B cell (primary cell): ENCODE measurements at regions of chr20 and their contacts with region 1.

Region 1: DNA sequence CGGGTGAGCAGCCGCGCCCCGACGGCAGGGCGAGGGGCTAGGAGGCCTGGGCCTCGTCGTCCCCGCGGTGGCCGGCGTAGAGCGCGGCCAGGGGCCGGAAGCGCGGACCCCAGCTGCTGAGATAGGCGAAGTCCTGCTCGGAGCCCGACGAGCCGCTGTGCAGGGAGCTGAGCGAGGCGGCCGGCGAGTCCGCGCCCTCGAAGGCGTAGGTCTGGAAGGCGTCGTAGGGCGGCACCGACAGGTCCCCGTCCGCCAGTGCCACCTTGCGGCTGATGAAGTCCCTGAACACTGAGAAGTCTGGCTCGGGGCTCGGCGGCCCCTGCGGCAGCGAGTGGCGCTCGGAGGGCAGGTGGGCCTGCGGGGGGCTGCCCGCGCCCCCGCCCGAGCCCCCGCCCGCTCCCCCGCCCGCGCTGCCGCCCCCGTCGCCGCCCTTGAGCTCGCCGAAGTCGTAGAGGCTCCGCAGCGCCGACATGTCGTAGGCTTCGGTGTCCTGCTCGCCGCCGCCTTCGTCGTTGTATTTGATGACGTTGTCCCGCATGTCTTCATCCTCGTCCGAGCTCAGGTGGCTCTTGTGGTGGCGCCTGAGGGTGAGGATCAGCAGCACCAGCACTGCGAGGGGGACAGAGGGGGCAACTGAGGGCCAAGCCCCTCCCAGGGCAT is 56.5 kb downstream of the CD40 start:
- DNase-seq: peak; percentile 85
- ATAC-seq: peak; percentile 96
- H3K4me3 ChIP-seq: no peak overlapping the region
- H3K4me3 Mint-ChIP-seq: no peak overlapping the region
- H3K27ac ChIP-seq: no peak overlapping the region
- H3K27ac Mint-ChIP-seq: no peak overlapping the region
- H3K4me1 ChIP-seq: peaks cover 4 to 16% of the 10 kb centered on the region in 2 donors
- H3K4me1 Mint-ChIP-seq: no peaks in the 10 kb centered on the region
- H3K27me3 ChIP-seq: peaks cover 0 to 45% (median 32%) of the 10 kb centered on the region in 4 experiments
- H3K27me3 Mint-ChIP-seq: peaks cover 58% of the 10 kb centered on the region
- CTCF ChIP-seq: peak; percentile 70

Region 2: DNA sequence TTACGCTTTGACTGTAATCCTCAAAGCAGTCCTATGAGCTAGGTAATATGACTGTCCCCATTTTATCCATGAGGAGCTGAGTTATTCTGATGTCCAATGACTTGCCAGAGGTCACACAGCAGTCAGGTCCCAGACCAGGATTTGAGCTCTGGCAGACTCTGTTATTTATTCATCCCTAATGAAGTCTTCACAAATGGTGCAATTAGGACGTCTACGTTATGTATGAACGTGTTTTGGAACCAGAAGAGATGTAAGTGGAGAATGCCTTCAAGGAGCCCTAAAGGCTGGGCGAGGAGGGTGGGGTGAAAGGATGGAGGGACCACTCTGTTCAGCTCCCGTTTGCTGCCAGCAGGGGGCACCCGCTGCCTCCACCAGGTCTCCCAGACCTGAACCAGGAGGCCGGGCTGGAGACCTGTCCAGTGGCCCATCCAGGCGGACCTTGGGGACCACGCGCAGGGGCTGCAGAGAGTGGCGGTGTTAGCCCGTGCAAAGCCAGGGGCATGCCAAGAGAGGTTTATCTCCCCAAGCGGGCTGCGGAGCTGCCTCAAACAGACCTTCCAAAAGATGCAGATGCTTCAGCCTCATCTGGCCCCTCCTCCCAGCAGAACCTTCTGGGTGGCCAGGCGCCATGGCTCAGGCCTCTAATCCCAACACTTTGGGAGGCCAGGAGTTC is 187.4 kb before region 1 on chr20:
- CTCF ChIA-PET with region 1: interaction called, 9 read pairs
- POLR2A ChIA-PET with region 1: no interaction called
- intact Hi-C with region 1: loop called (anchors 1 kb)
- DNase-seq: peak; percentile 82
- ATAC-seq: peak; percentile 98
- H3K4me3 ChIP-seq: no peak overlapping the region
- H3K4me3 Mint-ChIP-seq: no peak overlapping the region
- H3K27ac ChIP-seq: no peak overlapping the region
- H3K27ac Mint-ChIP-seq: no peak overlapping the region
- H3K4me1 ChIP-seq: peaks cover 4 to 12% of the 10 kb centered on the region in 2 donors
- H3K4me1 Mint-ChIP-seq: peaks cover 6% of the 10 kb centered on the region
- H3K27me3 ChIP-seq: peaks cover 0 to 27% (median 10%) of the 10 kb centered on the region in 4 experiments
- H3K27me3 Mint-ChIP-seq: peaks cover 20% of the 10 kb centered on the region
- CTCF ChIP-seq: peak; percentile 93

Region 3: GRCh38 chr20:46013826-46014516 is 160.6 kb before region 1 on chr20:
- CTCF ChIA-PET with region 1: interaction called, 53 read pairs
- POLR2A ChIA-PET with region 1: interaction called, 3 read pairs
- intact Hi-C with region 1: loop called (anchors 2 kb)
- DNase-seq: peak; percentile 87
- ATAC-seq: peak; percentile 88
- H3K4me3 ChIP-seq: peak overlapping the region in 4 of 5 experiments; percentile 19 to 47 (median 35)
- H3K4me3 Mint-ChIP-seq: peak overlapping the region; percentile 72
- H3K27ac ChIP-seq: no peak overlapping the region
- H3K27ac Mint-ChIP-seq: peak overlapping the region; percentile 63
- H3K4me1 ChIP-seq: peaks cover 48 to 49% of the 10 kb centered on the region in 2 donors
- H3K4me1 Mint-ChIP-seq: peaks cover 49% of the 10 kb centered on the region
- H3K27me3 ChIP-seq: peaks cover 0 to 57% (median 29%) of the 10 kb centered on the region in 4 experiments
- H3K27me3 Mint-ChIP-seq: peaks cover 59% of the 10 kb centered on the region
- CTCF ChIP-seq: peak; percentile 89

Region 4: DNA sequence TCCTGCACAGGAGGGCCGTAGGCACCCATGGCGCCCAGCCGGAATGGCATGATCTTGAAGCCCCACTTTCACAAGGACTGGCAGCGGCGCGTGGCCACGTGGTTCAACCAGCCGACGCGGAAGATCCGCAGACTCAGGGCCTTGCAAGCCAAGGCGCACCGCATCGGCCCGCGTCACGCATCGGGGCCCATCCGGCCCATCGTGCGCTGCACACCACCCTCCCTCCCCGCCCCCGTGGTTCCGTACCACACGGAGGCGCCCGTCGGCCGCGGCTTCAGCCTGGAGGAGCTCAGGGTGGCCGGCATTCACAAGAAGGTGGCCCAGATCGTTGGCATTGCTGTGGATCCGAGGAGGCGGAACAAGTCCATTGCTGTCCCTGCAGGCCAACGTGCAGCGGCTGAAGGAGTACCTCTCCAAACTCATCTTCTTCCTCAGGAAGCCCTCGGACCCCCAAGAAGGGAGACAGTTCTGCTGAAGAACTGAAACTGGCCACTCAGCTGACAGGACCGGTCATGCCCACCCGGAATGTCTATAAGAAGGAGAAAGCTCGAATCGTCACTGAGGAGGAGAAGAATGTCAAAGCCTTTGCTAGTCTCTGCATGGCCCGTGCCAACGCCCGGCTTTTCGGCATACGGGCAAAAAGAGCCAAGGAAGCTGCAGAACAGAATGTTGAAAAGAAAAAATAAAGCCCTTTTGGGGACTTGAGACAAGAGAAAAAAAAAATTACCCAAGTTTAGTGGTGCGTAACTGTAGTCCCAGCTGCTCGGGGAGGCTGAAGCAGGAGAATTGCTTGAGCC is 74.9 kb before region 1 on chr20:
- CTCF ChIA-PET with region 1: interaction called, 65 read pairs
- POLR2A ChIA-PET with region 1: no interaction called
- intact Hi-C with region 1: loop called (anchors 1 kb)
- DNase-seq: peak; percentile 86
- ATAC-seq: peak; percentile 99
- H3K4me3 ChIP-seq: peak overlapping the region in 4 of 5 experiments; percentile 14 to 49 (median 32)
- H3K4me3 Mint-ChIP-seq: peak overlapping the region; percentile 79
- H3K27ac ChIP-seq: no peak overlapping the region
- H3K27ac Mint-ChIP-seq: peak overlapping the region; percentile 56
- H3K4me1 ChIP-seq: peaks cover 8 to 12% of the 10 kb centered on the region in 2 donors
- H3K4me1 Mint-ChIP-seq: peaks cover 15% of the 10 kb centered on the region
- H3K27me3 ChIP-seq: no peaks in the 10 kb centered on the region
- H3K27me3 Mint-ChIP-seq: peaks cover 4% of the 10 kb centered on the region
- CTCF ChIP-seq: peak; percentile 45

Region 5: GRCh38 chr20:46132705-46133120 is 41.9 kb before region 1 on chr20:
- CTCF ChIA-PET with region 1: interaction called, 87 read pairs
- POLR2A ChIA-PET with region 1: interaction called, 3 read pairs
- intact Hi-C with region 1: loop called (anchors 1 kb)
- DNase-seq: peak; percentile 78
- ATAC-seq: peak; percentile 83
- H3K4me3 ChIP-seq: no peak overlapping the region
- H3K4me3 Mint-ChIP-seq: peak overlapping the region; percentile 4
- H3K27ac ChIP-seq: no peak overlapping the region
- H3K27ac Mint-ChIP-seq: peak overlapping the region; percentile 33
- H3K4me1 ChIP-seq: peaks cover 20 to 42% of the 10 kb centered on the region in 2 donors
- H3K4me1 Mint-ChIP-seq: peaks cover 48% of the 10 kb centered on the region
- H3K27me3 ChIP-seq: peaks cover 0 to 10% (median 0%) of the 10 kb centered on the region in 4 experiments
- H3K27me3 Mint-ChIP-seq: peaks cover 15% of the 10 kb centered on the region
- CTCF ChIP-seq: peak; percentile 87